Right cardiac atrium (tissue), 5 donors: ENCODE measurements at regions of chr22 and their contacts with region 1.

Region 1: GRCh38 chr22:37166675-37167066 is 17.0 kb upstream of the IL2RB start:
- DNase-seq: peak; percentile 89 to 96 (median 95)
- ATAC-seq: peak; percentile 90 to 92
- H3K4me3 ChIP-seq: no peak overlapping the region
- H3K27ac ChIP-seq: no peak overlapping the region
- H3K4me1 ChIP-seq: peaks cover 2% of the 10 kb centered on the region
- H3K27me3 ChIP-seq: no peaks in the 10 kb centered on the region

Region 2: GRCh38 chr22:37199103-37199759 is 32.6 kb after region 1 on chr22:
- intact Hi-C with region 1: loop called (anchors 2 to 5 kb)
- DNase-seq: peak; percentile 98 to 100 (median 100)
- ATAC-seq: peak; percentile 93 to 94
- H3K4me3 ChIP-seq: peak overlapping the region; percentile 56
- H3K27ac ChIP-seq: peak overlapping the region; percentile 97
- H3K4me1 ChIP-seq: peaks cover 22% of the 10 kb centered on the region
- H3K27me3 ChIP-seq: no peaks in the 10 kb centered on the region

Region 3: GRCh38 chr22:37260901-37261336 is 94.2 kb after region 1 on chr22:
- intact Hi-C with region 1: loop called in 1 of 4 experiments (anchors 5 kb)
- DNase-seq: peak; percentile 50 to 78 (median 69)
- ATAC-seq: peak; percentile 53 to 75
- H3K4me3 ChIP-seq: no peak overlapping the region
- H3K27ac ChIP-seq: no peak overlapping the region
- H3K4me1 ChIP-seq: no peaks in the 10 kb centered on the region
- H3K27me3 ChIP-seq: no peaks in the 10 kb centered on the region